Activated T-helper 2 cell treated with anti-CD3 and anti-CD28 coated beads, Interferon-gamma antibody, Interleukin-2, Interleukin-4, amounts not matched to agents 10 μg/mL and 5 μg/mL and 100 μg/mL, durations not matched to agents 14 hours and 24 hours and 36 hours (primary cell): ENCODE measurements at regions of chr3 and their contacts with region 1.

Region 1: DNA sequence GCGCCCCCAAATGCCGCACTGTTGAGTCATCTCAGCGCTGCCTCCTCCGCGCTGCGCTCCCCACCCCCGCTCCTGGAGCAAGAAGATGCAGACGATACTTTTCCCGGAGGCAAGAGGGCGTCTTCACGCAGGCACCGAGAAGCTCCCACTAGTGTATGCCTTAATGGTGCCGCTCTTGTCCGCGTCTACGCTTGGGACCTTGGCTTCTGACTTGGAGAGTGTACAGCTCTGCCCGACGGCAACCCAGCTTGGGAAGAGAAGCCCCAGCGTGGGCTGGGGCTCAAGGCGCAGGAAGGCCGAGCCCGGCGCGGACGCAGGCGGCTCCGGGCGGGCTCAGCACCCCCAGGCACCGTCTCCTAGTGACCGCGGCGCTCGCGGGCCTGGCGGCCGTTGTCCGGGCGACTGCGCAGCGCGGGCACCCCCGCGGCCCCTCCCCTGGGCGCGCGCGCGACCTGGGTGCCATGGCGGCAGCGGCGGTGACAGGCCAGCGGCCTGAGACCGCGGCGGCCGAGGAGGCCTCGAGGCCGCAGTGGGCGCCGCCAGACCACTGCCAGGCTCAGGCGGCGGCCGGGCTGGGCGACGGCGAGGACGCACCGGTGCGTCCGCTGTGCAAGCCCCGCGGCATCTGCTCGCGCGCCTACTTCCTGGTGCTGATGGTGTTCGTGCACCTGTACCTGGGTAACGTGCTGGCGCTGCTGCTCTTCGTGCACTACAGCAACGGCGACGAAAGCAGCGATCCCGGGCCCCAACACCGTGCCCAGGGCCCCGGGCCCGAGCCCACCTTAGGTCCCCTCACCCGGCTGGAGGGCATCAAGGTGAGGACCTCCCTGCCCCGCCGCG is at the start of gene P4HTM:
- DNase-seq: peak; percentile 64
- H3K4me3 Mint-ChIP-seq: peak within 1 kb of the TSS; percentile 93
- H3K27ac Mint-ChIP-seq: peak within 1 kb of the TSS; percentile 88
- H3K4me1 Mint-ChIP-seq: peaks cover 37% of the 10 kb centered on the region
- H3K27me3 Mint-ChIP-seq: no peaks in the 10 kb centered on the region
- total RNA-seq, gene P4HTM: 37.8 and 39.1 TPM in 2 replicates

Region 2: DNA sequence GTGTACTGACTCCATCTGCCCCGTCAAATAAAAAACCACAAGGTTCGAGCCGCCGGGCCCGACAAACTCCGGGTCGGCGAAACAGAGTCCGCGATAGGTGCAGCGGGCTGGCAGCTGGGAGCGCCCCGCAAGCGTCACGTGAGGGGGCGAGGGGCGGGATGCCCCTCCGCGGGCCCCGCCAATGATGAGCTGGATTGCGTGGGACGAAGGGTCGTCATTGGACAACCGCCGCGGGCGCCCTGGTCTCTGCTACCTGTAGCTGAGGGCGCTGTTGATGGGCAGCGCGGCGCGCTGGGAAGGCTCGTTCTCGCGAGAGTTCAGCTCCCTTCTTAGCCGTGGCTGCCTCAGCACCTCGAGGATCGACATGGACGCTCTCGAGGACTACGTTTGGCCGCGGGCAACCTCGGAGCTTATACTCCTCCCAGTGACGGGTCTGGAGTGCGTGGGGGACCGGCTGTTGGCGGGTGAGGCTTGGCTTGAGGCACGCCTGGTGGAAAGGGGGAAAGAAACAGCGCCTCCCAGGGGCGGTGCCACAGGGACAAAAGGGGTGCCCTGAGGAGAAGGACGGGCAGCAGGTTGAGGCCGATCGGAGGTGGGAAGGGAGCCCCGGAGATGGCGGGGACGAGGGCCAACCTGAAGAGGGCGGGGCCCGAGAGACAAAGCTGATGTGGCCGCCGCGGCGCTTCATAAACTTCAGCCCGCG is 17.2 kb after region 1 on chr3 and contains the start of gene WDR6:
- intact Hi-C with region 1: loop called (anchors 1 kb)
- DNase-seq: peak; percentile 96
- H3K4me3 Mint-ChIP-seq: peak within 1 kb of the TSS; percentile 98
- H3K27ac Mint-ChIP-seq: peak within 1 kb of the TSS; percentile 99
- H3K4me1 Mint-ChIP-seq: peaks cover 15% of the 10 kb centered on the region
- H3K27me3 Mint-ChIP-seq: no peaks in the 10 kb centered on the region
- total RNA-seq, gene WDR6: 161 and 167 TPM in 2 replicates

Region 3: DNA sequence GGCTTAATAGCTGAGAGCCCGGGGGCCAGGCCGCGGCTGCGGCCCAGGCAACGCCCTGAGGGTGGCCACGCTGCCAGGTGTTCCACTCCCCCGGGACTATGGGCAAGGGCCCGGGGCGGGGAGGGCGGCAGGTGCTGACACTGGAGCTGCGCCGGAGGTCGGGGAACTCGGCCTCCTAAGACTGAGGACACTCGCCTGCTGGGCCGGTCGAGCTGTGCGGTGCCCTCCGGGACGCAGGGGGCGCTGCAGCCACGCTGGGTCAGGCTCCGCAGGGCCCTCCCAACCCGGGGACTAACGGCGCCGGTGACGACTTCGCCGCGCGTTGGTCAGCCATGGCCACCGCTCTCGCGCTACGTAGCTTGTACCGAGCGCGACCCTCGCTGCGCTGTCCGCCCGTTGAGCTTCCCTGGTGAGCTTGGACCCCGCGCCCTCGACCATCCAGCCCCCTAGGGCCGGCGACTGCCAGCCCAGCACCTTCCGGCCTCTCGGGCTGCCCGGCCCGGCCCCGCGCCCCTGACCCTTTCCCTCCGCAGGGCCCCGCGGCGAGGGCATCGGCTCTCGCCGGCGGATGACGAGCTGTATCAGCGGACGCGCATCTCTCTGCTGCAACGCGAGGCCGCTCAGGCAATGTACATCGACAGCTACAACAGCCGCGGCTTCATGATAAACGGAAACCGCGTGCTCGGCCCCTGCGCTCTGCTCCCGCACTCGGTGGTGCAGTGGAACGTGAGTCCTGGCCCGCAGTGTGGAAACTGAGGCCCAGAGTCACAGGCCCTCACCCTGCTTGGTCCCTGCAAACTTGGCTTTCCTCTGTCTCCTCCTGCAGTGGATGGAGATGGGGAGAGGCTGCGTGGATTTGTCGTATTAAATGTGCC is 32.0 kb after region 1 on chr3 and contains the start of gene NDUFAF3:
- intact Hi-C with region 1: loop called (anchors 2 kb)
- DNase-seq: peak; percentile 91
- H3K4me3 Mint-ChIP-seq: peak within 1 kb of the TSS; percentile 95
- H3K27ac Mint-ChIP-seq: peak within 1 kb of the TSS; percentile 96
- H3K4me1 Mint-ChIP-seq: peaks cover 29% of the 10 kb centered on the region
- H3K27me3 Mint-ChIP-seq: no peaks in the 10 kb centered on the region
- total RNA-seq, gene NDUFAF3: 118 and 120 TPM in 2 replicates

Region 4: DNA sequence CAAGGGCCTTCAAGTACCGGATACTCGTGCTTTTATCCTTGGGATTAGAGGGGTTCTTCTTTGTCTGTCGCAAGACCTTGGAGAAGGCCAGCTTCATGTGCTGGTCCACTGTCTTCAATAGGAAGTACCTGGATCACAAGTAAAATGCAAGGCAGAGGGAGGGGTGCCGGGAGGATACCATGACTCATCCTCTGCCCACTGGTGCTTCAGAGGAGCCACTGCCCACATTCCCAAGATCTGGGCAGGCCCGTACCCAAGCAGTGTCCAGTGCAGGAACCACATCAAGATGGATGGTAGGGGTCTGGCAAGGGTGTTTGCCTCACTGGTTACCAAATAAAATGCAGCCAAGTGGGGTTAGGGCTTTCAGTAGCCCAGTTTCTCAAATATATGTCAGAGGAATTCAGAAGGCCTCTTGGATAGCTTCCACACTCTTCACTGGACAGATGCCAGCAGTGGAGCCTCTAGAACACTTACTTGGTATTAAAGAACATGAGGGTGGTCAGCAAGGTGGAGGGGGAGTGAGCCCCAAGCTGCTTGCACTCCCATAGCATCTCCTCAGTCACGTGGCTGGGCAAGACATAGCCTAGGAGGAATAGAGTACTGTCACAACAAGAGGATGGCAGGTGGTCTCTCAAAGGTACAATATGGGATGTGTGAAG is 42.8 kb after region 1 on chr3:
- intact Hi-C with region 1: no loop called
- DNase-seq: no peak
- H3K4me3 Mint-ChIP-seq: no peak overlapping the region
- H3K27ac Mint-ChIP-seq: no peak overlapping the region
- H3K4me1 Mint-ChIP-seq: peaks cover 15% of the 10 kb centered on the region
- H3K27me3 Mint-ChIP-seq: no peaks in the 10 kb centered on the region

Region 5: GRCh38 chr3:49053543-49053942 is 63.5 kb after region 1 on chr3:
- intact Hi-C with region 1: no loop called
- DNase-seq: no peak
- H3K4me3 Mint-ChIP-seq: no peak overlapping the region
- H3K27ac Mint-ChIP-seq: no peak overlapping the region
- H3K4me1 Mint-ChIP-seq: no peaks in the 10 kb centered on the region
- H3K27me3 Mint-ChIP-seq: no peaks in the 10 kb centered on the region

Region 6: GRCh38 chr3:49165771-49166751 is 176.0 kb after region 1 on chr3 and contains the start of gene CCDC71:
- intact Hi-C with region 1: loop called (anchors 10 kb)
- DNase-seq: peak; percentile 72
- H3K4me3 Mint-ChIP-seq: peak within 1 kb of the TSS; percentile 93
- H3K27ac Mint-ChIP-seq: peak within 1 kb of the TSS; percentile 85
- H3K4me1 Mint-ChIP-seq: peaks cover 24% of the 10 kb centered on the region
- H3K27me3 Mint-ChIP-seq: no peaks in the 10 kb centered on the region
- total RNA-seq, gene CCDC71: 24.4 and 24.9 TPM in 2 replicates